OCI-LY7 (cell line): ENCODE measurements at regions of chr13 and their contacts with region 1.

Region 1: GRCh38 chr13:25574437-25575411 is 202.9 kb downstream of the ATP8A2 start:
- DNase-seq: peak; percentile 79
- H3K4me3 ChIP-seq: no peak overlapping the region
- H3K27ac ChIP-seq: no peak overlapping the region
- H3K4me1 ChIP-seq: no peaks in the 10 kb centered on the region
- CTCF ChIP-seq: peak; percentile 97

Region 2: GRCh38 chr13:26062844-26063444 is 488.2 kb after region 1 on chr13:
- CTCF ChIA-PET with region 1: no interaction called
- POLR2A ChIA-PET with region 1: no interaction called
- intact Hi-C with region 1: loop called (anchors 1 kb)
- DNase-seq: peak; percentile 50
- H3K4me3 ChIP-seq: no peak overlapping the region
- H3K27ac ChIP-seq: no peak overlapping the region
- H3K4me1 ChIP-seq: no peaks in the 10 kb centered on the region
- CTCF ChIP-seq: peak; percentile 86

Region 3: DNA sequence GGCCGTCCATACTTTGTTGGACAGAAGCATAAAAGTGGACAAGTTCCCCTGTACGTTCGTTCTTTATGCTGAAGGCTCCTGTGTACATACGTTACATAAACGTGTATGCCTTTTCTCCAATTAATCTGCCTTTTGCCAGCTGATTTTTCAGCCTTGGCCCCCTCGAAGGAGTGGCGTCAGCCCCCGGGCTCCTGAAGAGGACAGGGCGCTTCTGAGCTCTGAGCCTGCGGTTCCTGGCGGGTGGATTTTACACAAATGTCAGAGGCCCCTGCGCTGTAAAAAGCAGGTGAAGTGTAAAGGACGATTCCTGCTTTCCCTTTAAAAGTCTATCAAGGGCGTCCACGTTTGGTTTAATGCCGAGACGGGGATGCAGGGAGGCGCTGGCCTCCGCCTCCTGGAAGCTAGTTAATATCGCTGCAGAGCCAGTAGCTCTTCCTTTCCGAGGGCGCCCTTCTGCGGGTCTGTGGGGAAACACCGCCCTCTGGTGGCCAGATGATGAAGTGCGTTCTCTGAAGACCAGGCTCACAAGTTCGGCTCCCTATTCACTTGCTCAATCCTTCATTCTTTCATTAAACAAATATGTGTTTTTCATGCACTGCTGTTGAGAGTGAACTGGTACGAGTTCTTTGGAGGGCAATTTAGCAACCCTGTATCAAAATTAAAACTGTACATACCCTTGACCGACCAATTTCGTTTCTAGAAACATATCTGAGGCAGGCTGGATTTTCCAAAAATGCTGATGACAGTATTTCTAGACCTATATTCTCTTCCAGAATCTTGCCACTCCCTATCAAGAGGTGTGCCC is 1123.9 kb after region 1 on chr13:
- CTCF ChIA-PET with region 1: no interaction called
- POLR2A ChIA-PET with region 1: no interaction called
- intact Hi-C with region 1: loop called (anchors 2 kb)
- DNase-seq: peak; percentile 73
- H3K4me3 ChIP-seq: no peak overlapping the region
- H3K27ac ChIP-seq: no peak overlapping the region
- H3K4me1 ChIP-seq: no peaks in the 10 kb centered on the region
- CTCF ChIP-seq: peak; percentile 97